Upper lobe of right lung (tissue), 1 donor: ENCODE measurements at regions of chr21 and their contacts with region 1.

Region 1: DNA sequence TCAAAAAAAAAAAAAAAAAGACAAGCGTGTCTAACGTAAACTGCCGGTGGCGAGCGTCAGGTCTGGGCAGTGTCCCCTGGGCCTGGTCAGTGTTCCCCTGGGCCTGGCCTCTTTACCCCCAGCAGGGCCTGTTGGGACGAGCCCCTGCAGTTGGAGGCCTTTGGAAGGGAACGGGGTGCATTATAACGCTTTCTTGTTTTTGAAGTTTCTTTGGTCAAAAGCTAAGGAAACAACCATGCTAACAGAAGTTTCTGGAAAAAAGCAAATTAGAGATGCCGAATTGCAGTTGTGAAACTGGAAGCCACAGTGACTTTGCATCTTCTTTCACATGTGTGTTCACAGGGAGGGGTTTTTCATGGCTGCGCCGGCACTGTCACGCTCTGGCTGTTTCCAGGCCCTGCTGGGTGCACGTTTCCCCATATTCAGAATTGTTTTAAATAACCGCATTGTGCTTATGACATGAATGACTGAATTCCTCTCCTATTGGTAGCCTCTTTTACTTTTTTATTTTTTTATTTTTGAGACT is 16.0 kb downstream of the RRP1 start:
- DNase-seq: no peak
- ATAC-seq: peak; percentile 20
- H3K4me3 ChIP-seq: no peak overlapping the region
- H3K27ac ChIP-seq: no peak overlapping the region
- H3K4me1 ChIP-seq: no peaks in the 10 kb centered on the region
- H3K27me3 ChIP-seq: no peaks in the 10 kb centered on the region
- CTCF ChIP-seq: no peak

Region 2: DNA sequence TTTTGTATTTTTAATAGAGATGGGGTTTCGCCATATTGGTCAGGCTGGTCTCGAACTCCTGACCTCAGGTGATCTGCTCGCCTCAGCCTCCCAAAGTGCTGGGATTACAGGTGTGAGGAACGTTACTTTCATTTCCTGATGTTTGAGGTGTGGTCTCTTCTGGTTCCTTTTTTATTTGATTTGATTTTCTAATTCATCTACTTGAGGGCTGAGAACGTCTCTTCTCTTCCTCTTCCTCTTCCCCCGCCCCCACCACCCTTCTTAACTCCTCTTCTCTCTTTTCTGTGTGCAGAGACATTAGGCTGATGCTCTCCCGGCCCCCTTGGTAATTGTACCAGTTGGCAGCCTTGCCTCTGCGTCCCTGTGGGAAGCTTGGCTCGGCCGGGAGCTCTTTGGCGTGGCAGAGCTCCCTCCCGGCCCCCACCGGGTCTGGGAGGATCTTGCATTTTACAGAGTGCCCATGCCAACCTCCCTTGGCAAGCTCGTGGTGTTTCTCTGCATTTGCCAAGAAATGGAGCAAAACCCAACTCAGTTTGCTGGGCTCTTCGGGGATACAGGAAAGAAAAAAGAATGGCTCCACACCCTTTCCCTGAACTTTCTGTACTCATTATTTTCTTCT is 616.6 kb before region 1 on chr21:
- intact Hi-C with region 1: no loop called
- DNase-seq: peak; percentile 63
- ATAC-seq: no peak
- H3K4me3 ChIP-seq: no peak overlapping the region
- H3K27ac ChIP-seq: no peak overlapping the region
- H3K4me1 ChIP-seq: no peaks in the 10 kb centered on the region
- H3K27me3 ChIP-seq: no peaks in the 10 kb centered on the region
- CTCF ChIP-seq: no peak

Region 3: DNA sequence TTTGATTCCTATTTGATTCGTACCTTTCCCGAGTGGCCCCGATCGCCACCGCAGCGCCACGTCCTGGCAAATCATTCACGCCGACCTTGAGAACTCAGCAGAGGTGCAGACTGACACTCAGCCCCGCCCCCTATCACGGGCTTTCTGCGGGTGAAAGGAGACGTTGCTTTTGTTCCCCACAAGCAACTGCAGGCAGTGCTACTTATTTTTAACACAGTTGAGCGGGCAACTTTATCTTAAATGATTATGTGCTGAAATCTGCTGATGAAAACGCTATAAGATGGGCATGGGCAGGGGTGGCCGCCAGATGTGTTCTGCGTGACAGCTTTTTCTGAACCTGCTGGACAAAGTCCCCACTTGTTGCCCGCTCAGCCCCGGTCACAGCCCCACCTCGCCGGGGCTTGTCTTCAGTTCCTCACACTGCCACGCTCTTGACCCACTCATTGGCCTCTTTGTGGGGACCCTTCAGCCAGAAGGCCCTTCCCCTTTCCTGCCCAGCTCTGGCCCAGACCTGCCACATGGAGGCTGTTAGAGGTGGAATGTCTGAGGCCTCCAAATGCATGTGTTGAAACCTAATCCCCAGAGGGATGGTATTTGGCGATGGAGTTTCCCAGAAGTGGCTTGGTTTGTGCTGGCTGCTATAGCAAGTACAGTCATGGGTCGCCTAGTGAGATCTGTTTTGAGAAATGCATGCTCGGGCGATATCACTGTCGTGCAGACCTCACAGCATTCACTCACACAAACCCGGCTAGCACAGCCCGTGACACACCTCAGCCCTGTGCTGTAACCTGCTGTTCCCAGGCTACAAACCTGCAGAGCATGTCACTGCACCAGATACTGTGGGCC is 102.1 kb before region 1 on chr21:
- intact Hi-C with region 1: no loop called
- DNase-seq: no peak
- ATAC-seq: peak; percentile 51
- H3K4me3 ChIP-seq: no peak overlapping the region
- H3K27ac ChIP-seq: no peak overlapping the region
- H3K4me1 ChIP-seq: peaks cover 10% of the 10 kb centered on the region
- H3K27me3 ChIP-seq: no peaks in the 10 kb centered on the region
- CTCF ChIP-seq: no peak

Region 4: GRCh38 chr21:43902441-43902840 is 97.1 kb after region 1 on chr21:
- intact Hi-C with region 1: loop called (anchors 10 kb)
- DNase-seq: peak; percentile 51
- ATAC-seq: peak; percentile 7
- H3K4me3 ChIP-seq: no peak overlapping the region
- H3K27ac ChIP-seq: peak overlapping the region; percentile 43
- H3K4me1 ChIP-seq: peaks cover 17% of the 10 kb centered on the region
- H3K27me3 ChIP-seq: no peaks in the 10 kb centered on the region
- CTCF ChIP-seq: no peak